ENCODE measurements at regions of chr7 and their contacts with region 1.

Region 1: DNA sequence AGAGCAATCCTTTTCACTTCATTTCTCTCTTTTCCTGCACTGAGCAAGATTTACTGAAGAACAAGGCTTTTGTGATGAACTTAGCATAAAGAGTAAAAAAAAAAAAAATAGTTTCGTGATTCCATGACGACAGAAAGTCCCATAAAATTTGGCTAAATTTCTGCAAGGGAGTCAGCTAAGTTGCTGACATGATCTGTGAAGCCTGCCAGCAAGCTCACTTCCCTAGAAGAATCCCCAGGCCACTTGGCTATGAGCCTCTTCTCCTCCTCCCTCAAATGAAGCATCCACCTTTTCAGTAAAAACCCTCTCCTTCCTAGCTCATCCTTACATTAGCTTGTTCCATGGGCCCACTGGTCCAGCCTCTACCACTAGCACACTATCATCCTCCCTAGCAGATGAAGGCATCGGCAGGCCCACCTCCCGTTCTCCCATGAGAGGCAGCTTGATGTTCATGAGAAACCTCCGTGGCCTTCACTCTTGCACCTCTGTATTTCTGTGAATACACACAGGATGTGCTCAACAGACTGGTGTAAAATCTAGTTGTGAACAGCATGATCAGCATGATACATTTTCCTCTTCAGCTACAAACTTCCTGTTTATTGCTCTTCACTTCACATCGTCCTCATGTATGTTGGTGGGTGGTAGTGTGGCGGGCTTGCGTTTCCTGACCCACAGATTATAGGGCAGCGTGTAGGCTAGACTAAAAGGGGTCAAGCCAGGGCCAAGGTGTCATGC is 30.9 kb downstream of the GIMAP8 start:
- DNase-seq: peak; percentile 63 to 87 (median 69)
- H3K4me3 ChIP-seq: peak overlapping the region in 1 of 2 donors; percentile 37
- H3K4me3 Mint-ChIP-seq: peak overlapping the region; percentile 80 to 90 (median 88)
- H3K27ac ChIP-seq: peak overlapping the region; percentile 71
- H3K27ac Mint-ChIP-seq: peak overlapping the region; percentile 96 to 100 (median 99)
- H3K4me1 ChIP-seq: peaks cover 99% of the 10 kb centered on the region
- H3K4me1 Mint-ChIP-seq: peaks cover 75 to 98% (median 91%) of the 10 kb centered on the region in 4 donors
- H3K27me3 ChIP-seq: no peaks in the 10 kb centered on the region
- H3K27me3 Mint-ChIP-seq: no peaks in the 10 kb centered on the region

Region 2: GRCh38 chr7:150466477-150466876 is 14.9 kb before region 1 on chr7:
- CTCF ChIA-PET with region 1: interaction called, 6 read pairs
- POLR2A ChIA-PET with region 1: interaction called, 1,079 read pairs
- intact Hi-C with region 1: loop called (anchors 2 kb)
- DNase-seq: no peak
- H3K4me3 ChIP-seq: no peak overlapping the region
- H3K4me3 Mint-ChIP-seq: peak overlapping the region in 6 of 8 donors; percentile 4 to 55 (median 38)
- H3K27ac ChIP-seq: peak overlapping the region; percentile 3
- H3K27ac Mint-ChIP-seq: peak overlapping the region in 5 of 7 donors; percentile 30 to 80 (median 54)
- H3K4me1 ChIP-seq: peaks cover 82% of the 10 kb centered on the region
- H3K4me1 Mint-ChIP-seq: peaks cover 65 to 93% (median 75%) of the 10 kb centered on the region in 4 donors
- H3K27me3 ChIP-seq: no peaks in the 10 kb centered on the region
- H3K27me3 Mint-ChIP-seq: no peaks in the 10 kb centered on the region

Region 3: DNA sequence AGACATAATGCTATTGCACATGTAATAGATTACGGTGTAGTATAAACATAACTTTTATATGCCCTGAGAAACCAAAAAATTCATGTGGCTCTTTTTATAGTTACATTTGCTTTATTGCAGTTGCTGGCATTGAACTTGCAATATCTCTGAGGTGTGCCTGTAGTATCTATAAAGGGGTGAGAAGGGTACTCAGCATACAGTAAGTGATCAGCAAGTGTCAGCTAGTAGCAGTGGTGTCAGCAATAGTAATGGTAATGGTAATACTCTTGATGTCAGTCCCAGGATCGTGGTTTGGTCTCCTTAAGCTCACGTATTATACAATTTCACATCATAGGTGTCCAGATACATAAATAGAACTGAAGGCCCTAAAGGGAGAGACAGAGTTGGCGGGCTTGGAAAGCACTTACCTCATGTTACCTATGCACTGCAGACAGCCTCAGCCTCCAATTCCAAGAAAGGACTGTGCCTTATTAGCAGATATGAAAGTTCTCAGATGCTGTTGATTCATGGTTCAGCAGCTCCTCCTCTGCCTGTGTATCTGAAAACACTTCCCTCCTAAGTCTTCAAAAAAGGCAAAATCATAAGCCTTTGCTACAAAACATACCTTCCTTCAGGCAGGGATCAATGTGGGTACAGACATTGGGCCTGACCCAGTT is 26.7 kb after region 1 on chr7:
- CTCF ChIA-PET with region 1: interaction called, 11 read pairs
- POLR2A ChIA-PET with region 1: interaction called, 673 read pairs
- intact Hi-C with region 1: loop called (anchors 2 kb)
- DNase-seq: no peak
- H3K4me3 ChIP-seq: peak overlapping the region; percentile 4 to 28
- H3K4me3 Mint-ChIP-seq: peak overlapping the region; percentile 78 to 88 (median 85)
- H3K27ac ChIP-seq: peak overlapping the region; percentile 61
- H3K27ac Mint-ChIP-seq: peak overlapping the region; percentile 89 to 96 (median 93)
- H3K4me1 ChIP-seq: peaks cover 95% of the 10 kb centered on the region
- H3K4me1 Mint-ChIP-seq: peaks cover 78 to 97% (median 87%) of the 10 kb centered on the region in 4 donors
- H3K27me3 ChIP-seq: no peaks in the 10 kb centered on the region
- H3K27me3 Mint-ChIP-seq: no peaks in the 10 kb centered on the region

Region 4: GRCh38 chr7:150620617-150621371 is 139.4 kb after region 1 on chr7:
- CTCF ChIA-PET with region 1: no interaction called
- POLR2A ChIA-PET with region 1: interaction called, 11 read pairs
- intact Hi-C with region 1: no loop called
- DNase-seq: no peak
- H3K4me3 ChIP-seq: no peak overlapping the region
- H3K4me3 Mint-ChIP-seq: peak overlapping the region; percentile 2 to 63 (median 44)
- H3K27ac ChIP-seq: no peak overlapping the region
- H3K27ac Mint-ChIP-seq: peak overlapping the region; percentile 70 to 92 (median 86)
- H3K4me1 ChIP-seq: peaks cover 41% of the 10 kb centered on the region
- H3K4me1 Mint-ChIP-seq: peaks cover 42 to 61% (median 54%) of the 10 kb centered on the region in 4 donors
- H3K27me3 ChIP-seq: no peaks in the 10 kb centered on the region
- H3K27me3 Mint-ChIP-seq: no peaks in the 10 kb centered on the region

Region 5: DNA sequence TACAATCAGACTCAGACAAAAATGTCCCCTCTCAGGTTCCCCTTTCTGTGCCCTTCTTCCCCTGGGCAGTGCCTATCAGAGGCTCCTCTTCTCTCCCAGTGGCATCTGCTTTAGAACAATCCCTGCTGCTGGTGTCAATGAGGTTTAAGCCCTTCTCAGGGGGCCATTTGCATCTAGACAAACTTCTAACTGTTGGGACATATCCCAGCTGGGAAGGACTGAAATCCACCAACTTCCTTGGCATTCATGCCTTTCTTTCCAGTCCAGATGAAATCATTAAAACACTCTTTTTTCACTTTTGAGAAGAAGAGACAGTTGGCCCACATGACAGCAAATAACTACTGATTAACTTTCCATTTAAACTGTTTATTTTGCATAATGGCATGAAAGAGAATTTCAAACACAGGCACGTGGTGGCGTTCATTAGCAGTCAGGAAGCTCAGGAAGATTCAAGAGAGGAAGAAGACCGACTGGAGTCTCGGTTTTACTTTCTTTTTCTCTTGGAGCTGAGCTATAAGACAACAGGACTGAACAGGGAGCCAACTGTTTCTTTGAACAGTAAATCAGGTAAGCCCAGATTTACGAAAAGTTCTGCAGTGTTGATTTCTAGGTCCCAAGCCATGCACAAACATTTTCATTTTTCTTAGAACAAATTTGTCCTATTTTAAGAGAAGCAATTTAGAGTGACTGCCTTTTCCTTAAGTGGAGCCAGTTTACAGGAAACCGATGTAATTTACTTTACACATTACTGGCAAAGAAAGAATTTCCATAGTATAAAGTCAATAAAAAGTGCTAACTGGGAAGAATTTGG is 204.1 kb after region 1 on chr7 and contains the start of gene GIMAP2:
- CTCF ChIA-PET with region 1: no interaction called
- POLR2A ChIA-PET with region 1: interaction called, 21 read pairs
- intact Hi-C with region 1: no loop called
- DNase-seq: peak; percentile 64 to 69 (median 65)
- H3K4me3 ChIP-seq: peak within 1 kb of the TSS; percentile 80 to 97
- H3K4me3 Mint-ChIP-seq: peak within 1 kb of the TSS; percentile 94 to 99 (median 98)
- H3K27ac ChIP-seq: peak within 1 kb of the TSS; percentile 90
- H3K27ac Mint-ChIP-seq: peak within 1 kb of the TSS; percentile 90 to 99 (median 97)
- H3K4me1 ChIP-seq: peaks cover 60% of the 10 kb centered on the region
- H3K4me1 Mint-ChIP-seq: peaks cover 55 to 97% (median 74%) of the 10 kb centered on the region in 4 donors
- H3K27me3 ChIP-seq: no peaks in the 10 kb centered on the region
- H3K27me3 Mint-ChIP-seq: no peaks in the 10 kb centered on the region
- total RNA-seq, gene GIMAP2: 238 to 244 TPM

Region 6: GRCh38 chr7:150737265-150738055 is 256.1 kb after region 1 on chr7 and contains the start of gene GIMAP5:
- CTCF ChIA-PET with region 1: interaction called, 3 read pairs
- POLR2A ChIA-PET with region 1: interaction called, 93 read pairs
- intact Hi-C with region 1: no loop called
- DNase-seq: peak in 4 of 5 donors; percentile 58 to 74 (median 61)
- H3K4me3 ChIP-seq: peak within 1 kb of the TSS; percentile 81 to 82
- H3K4me3 Mint-ChIP-seq: peak within 1 kb of the TSS; percentile 92 to 100 (median 98)
- H3K27ac ChIP-seq: peak within 1 kb of the TSS; percentile 83
- H3K27ac Mint-ChIP-seq: peak within 1 kb of the TSS; percentile 86 to 98 (median 96)
- H3K4me1 ChIP-seq: peaks cover 64% of the 10 kb centered on the region
- H3K4me1 Mint-ChIP-seq: peaks cover 55 to 94% (median 64%) of the 10 kb centered on the region in 4 donors
- H3K27me3 ChIP-seq: no peaks in the 10 kb centered on the region
- H3K27me3 Mint-ChIP-seq: no peaks in the 10 kb centered on the region
- total RNA-seq, gene GIMAP5: 296 to 297 TPM